ENCODE measurements at regions of chr1 and their contacts with region 1.

Region 1: DNA sequence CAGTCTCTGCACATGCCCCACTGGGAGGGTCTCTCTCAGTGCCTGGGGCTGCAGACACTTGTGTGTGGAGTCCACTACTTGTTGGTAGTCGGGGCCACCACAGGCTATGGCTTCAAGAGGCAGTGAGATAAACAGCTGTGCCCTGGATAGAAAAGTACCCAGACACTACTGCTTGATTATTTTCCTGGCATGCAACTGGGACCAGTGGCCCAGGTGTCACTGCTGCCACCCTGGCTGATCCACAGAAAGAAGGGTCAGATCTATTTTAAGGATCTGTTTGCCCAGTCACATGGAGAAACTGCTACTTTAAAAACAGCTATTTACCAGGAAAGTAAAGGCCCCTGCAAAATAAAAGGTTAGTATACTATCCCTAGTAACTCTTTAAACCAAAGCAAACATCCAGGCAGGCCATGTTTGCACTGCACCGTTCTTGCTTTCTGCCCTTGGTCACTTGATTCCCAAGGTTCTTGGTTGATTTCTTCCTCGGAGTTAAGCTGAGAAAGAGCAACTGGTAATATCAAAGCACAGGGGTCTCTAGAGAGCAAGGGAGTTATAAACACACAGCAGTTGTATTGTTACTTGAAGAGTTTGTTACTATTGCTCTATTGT is 99.9 kb downstream of the GLUL start:
- DNase-seq: no peak
- H3K4me3 Mint-ChIP-seq: no peak overlapping the region
- H3K27ac Mint-ChIP-seq: peak overlapping the region; percentile 36
- H3K4me1 Mint-ChIP-seq: peaks cover 31% of the 10 kb centered on the region
- H3K27me3 Mint-ChIP-seq: no peaks in the 10 kb centered on the region
- CTCF ChIP-seq: no peak

Region 2: GRCh38 chr1:182198049-182198501 is 93.6 kb before region 1 on chr1:
- CTCF ChIA-PET with region 1: interaction called, 3 read pairs
- POLR2A ChIA-PET with region 1: interaction called, 22 read pairs
- intact Hi-C with region 1: no loop called
- DNase-seq: peak; percentile 62
- H3K4me3 Mint-ChIP-seq: peak overlapping the region; percentile 15
- H3K27ac Mint-ChIP-seq: peak overlapping the region; percentile 94
- H3K4me1 Mint-ChIP-seq: peaks cover 56% of the 10 kb centered on the region
- H3K27me3 Mint-ChIP-seq: no peaks in the 10 kb centered on the region
- CTCF ChIP-seq: peak; percentile 20

Region 3: DNA sequence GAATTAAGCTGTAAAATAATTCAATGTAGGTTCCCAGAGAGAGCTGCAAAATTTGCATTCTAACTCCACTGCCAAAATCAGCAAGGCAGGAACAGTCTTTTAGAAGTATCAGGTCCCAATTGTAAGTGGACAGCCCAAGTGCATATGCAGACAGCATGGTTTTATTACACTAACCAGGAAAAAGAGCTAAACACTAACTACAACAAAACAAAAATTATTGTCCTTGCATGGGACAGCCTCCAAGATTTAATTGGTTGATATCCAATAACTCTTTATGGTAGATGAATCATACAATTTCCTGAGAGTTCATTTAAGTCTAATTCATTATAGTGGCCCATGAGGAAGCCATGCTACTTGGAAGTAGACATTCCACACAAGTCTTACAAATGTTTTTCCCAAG is 75.9 kb before region 1 on chr1:
- CTCF ChIA-PET with region 1: no interaction called
- POLR2A ChIA-PET with region 1: interaction called, 22 read pairs
- intact Hi-C with region 1: no loop called
- DNase-seq: peak; percentile 28
- H3K4me3 Mint-ChIP-seq: no peak overlapping the region
- H3K27ac Mint-ChIP-seq: peak overlapping the region; percentile 7
- H3K4me1 Mint-ChIP-seq: peaks cover 32% of the 10 kb centered on the region
- H3K27me3 Mint-ChIP-seq: no peaks in the 10 kb centered on the region
- CTCF ChIP-seq: no peak

Region 4: DNA sequence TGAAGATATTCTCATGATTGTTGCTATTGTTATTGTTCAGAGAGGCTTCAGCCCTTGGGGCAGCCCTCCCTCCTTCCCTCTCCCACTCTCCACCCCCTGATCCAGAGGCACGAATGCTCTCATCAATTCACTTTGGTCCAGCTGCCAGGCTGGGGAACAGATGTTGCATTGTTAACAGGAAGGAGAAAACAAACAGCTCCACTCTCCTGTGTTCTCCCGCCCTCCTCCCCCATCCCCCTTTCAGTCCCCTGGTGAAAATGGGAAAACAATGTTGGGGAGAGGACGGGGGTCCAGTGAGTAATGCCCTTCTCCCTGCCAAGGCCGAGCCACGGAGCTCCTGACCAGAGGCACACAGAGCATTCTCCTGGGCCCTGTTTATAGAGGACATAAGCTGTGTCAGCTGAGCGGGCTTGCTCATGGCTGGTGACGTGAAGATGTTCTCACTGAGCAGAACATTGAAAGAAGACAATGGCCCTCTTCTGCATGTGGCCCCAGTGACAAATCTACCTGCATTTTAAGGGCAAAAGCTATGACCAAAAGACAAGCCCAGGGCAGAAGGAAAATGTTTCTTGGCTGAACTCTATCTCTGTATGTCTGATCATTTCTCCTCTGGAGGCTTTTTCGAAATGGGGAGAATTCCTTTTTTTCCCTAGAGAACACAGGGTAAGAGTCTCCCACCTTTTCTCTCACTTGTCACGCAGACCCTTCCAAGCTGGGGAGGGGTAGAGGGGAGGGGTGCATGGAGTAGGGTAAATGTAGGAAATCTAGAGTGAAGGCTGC is 11.8 kb before region 1 on chr1:
- CTCF ChIA-PET with region 1: interaction called, 15 read pairs
- POLR2A ChIA-PET with region 1: interaction called, 22 read pairs
- intact Hi-C with region 1: no loop called
- DNase-seq: no peak
- H3K4me3 Mint-ChIP-seq: no peak overlapping the region
- H3K27ac Mint-ChIP-seq: no peak overlapping the region
- H3K4me1 Mint-ChIP-seq: no peaks in the 10 kb centered on the region
- H3K27me3 Mint-ChIP-seq: no peaks in the 10 kb centered on the region
- CTCF ChIP-seq: no peak

Region 5: GRCh38 chr1:182391362-182392044 is 99.8 kb after region 1 on chr1 and contains the start of gene GLUL:
- CTCF ChIA-PET with region 1: interaction called, 26 read pairs
- POLR2A ChIA-PET with region 1: interaction called, 70 read pairs
- intact Hi-C with region 1: no loop called
- DNase-seq: peak; percentile 90
- H3K4me3 Mint-ChIP-seq: peak within 1 kb of the TSS; percentile 100
- H3K27ac Mint-ChIP-seq: peak within 1 kb of the TSS; percentile 100
- H3K4me1 Mint-ChIP-seq: peaks cover 27% of the 10 kb centered on the region
- H3K27me3 Mint-ChIP-seq: no peaks in the 10 kb centered on the region
- CTCF ChIP-seq: peak; percentile 2
- total RNA-seq, gene GLUL: 240 and 437 TPM in 2 replicates

Region 6: DNA sequence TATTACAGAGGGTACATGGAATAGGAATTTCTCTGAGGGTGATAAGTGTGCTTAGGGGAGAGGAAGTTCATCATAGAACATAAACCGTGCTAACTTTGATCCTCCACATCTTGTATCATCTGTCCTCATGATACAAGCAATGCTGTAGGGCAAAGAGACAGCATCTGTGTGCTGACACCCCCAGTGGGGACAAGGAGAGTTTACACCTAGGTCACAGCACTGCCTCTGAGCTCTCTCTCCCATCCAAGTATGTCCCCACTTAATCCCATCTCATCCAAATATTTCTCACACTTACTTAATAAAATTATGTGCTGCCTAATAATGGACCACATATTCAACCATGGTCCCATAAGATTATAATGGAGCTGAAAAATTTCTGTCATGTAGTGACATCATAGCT is 113.1 kb after region 1 on chr1:
- CTCF ChIA-PET with region 1: no interaction called
- POLR2A ChIA-PET with region 1: no interaction called
- intact Hi-C with region 1: no loop called
- DNase-seq: no peak
- H3K4me3 Mint-ChIP-seq: no peak overlapping the region
- H3K27ac Mint-ChIP-seq: no peak overlapping the region
- H3K4me1 Mint-ChIP-seq: no peaks in the 10 kb centered on the region
- H3K27me3 Mint-ChIP-seq: no peaks in the 10 kb centered on the region
- CTCF ChIP-seq: no peak

Region 7: GRCh38 chr1:182556279-182556678 is 264.6 kb after region 1 on chr1:
- CTCF ChIA-PET with region 1: no interaction called
- POLR2A ChIA-PET with region 1: no interaction called
- intact Hi-C with region 1: no loop called
- DNase-seq: peak; percentile 58
- H3K4me3 Mint-ChIP-seq: no peak overlapping the region
- H3K27ac Mint-ChIP-seq: no peak overlapping the region
- H3K4me1 Mint-ChIP-seq: no peaks in the 10 kb centered on the region
- H3K27me3 Mint-ChIP-seq: no peaks in the 10 kb centered on the region
- CTCF ChIP-seq: no peak

Measured in MCF 10A (cell line).